ENCODE measurements at regions of chr6 and their contacts with region 1.

Region 1: DNA sequence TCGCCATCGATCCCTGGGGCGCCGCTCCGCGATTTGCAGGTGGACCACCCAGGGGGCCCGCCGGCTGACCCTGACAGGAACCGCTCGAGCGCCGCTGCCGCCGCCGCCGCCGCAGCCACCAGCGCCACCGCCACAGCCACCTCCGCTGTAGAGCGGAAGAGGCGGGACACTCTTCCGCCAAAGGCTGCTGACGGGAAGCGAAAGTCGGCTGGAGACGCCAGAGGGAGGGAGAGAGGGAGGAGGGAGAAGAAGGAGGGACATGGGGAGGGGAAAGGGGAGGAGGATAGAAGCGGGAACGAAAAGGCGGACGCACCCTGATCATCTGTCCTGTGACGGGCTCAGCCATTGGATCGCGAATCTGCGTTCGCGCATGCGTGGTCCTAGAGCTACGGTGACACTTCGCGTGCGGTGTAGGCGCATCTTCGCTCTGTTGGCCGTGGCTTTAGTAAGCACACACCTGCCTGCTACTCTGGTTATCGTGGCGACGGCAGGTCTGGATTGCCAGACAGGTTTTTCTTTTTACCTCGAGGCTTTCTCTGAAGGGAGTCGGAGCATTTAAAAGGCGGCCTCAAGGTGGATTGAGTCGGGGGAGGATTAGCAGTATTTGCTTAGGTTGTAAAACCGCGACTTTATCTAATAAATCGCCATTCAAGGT is at the start of gene TMEM30A:
- DNase-seq: peak; percentile 99
- H3K4me3 ChIP-seq: peak within 1 kb of the TSS; percentile 96
- H3K27ac ChIP-seq: peak within 1 kb of the TSS; percentile 79
- H3K27me3 ChIP-seq: no peaks in the 10 kb centered on the region
- CTCF ChIP-seq: no peak

Region 2: DNA sequence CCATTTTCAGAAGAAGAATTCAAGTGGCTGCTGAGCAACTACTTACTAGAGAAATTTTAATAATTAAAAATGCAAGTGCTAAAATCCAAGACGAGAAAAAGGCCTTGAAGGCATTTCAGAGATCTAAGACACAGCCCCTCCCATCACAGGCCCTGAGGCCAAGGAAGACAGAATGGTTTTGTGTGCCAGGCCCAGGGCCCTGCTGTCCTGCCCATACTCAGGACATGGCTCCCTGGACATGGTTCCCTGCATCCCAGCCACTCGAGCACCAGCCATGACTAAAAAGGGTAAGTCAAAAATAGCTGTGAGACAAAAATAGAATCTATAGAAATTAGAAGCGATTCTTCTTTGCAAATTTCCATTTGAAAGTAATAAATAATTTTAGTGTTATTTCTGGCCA is 443.8 kb before region 1 on chr6:
- in situ Hi-C with region 1: no loop called
- DNase-seq: no peak
- H3K4me3 ChIP-seq: no peak overlapping the region
- H3K27ac ChIP-seq: no peak overlapping the region
- H3K27me3 ChIP-seq: no peaks in the 10 kb centered on the region
- CTCF ChIP-seq: no peak

Region 3: GRCh38 chr6:75526502-75527127 is 241.9 kb after region 1 on chr6:
- in situ Hi-C with region 1: loop called (anchors 25 kb)
- DNase-seq: peak; percentile 83
- H3K4me3 ChIP-seq: no peak overlapping the region
- H3K27ac ChIP-seq: no peak overlapping the region
- H3K27me3 ChIP-seq: no peaks in the 10 kb centered on the region
- CTCF ChIP-seq: peak; percentile 70